ENCODE measurements at regions of chr10 and their contacts with region 1.

Region 1: GRCh38 chr10:100847440-100847839 is 65.3 kb upstream of the SLF2 start:
- DNase-seq: peak; percentile 94
- H3K4me3 Mint-ChIP-seq: peak overlapping the region; percentile 18
- H3K27ac Mint-ChIP-seq: peak overlapping the region; percentile 86
- H3K4me1 Mint-ChIP-seq: peaks cover 28% of the 10 kb centered on the region
- H3K27me3 Mint-ChIP-seq: peaks cover 48% of the 10 kb centered on the region

Region 2: DNA sequence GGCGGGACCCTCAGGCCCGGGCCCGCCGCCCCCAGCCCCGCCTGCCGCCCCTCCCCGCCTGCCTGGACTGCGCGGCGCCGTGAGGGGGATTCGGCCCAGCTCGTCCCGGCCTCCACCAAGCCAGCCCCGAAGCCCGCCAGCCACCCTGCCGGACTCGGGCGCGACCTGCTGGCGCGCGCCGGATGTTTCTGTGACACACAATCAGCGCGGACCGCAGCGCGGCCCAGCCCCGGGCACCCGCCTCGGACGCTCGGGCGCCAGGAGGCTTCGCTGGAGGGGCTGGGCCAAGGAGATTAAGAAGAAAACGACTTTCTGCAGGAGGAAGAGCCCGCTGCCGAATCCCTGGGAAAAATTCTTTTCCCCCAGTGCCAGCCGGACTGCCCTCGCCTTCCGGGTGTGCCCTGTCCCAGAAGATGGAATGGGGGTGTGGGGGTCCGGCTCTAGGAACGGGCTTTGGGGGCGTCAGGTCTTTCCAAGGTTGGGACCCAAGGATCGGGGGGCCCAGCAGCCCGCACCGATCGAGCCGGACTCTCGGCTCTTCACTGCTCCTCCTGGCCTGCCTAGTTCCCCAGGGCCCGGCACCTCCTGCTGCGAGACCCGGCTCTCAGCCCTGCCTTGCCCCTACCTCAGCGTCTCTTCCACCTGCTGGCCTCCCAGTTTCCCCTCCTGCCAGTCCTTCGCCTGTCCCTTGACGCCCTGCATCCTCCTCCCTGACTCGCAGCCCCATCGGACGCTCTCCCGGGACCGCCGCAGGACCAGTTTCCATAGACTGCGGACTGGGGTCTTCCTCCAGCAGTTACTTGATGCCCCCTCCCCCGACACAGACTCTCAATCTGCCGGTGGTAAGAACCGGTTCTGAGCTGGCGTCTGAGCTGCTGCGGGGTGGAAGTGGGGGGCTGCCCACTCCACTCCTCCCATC is 19.4 kb before region 1 on chr10:
- CTCF ChIA-PET with region 1: interaction called, 3 read pairs
- POLR2A ChIA-PET with region 1: no interaction called
- intact Hi-C with region 1: loop called (anchors 1 kb)
- DNase-seq: peak; percentile 57
- H3K4me3 Mint-ChIP-seq: peak overlapping the region; percentile 67
- H3K27ac Mint-ChIP-seq: no peak overlapping the region
- H3K4me1 Mint-ChIP-seq: peaks cover 21% of the 10 kb centered on the region
- H3K27me3 Mint-ChIP-seq: peaks cover 72% of the 10 kb centered on the region

Region 3: DNA sequence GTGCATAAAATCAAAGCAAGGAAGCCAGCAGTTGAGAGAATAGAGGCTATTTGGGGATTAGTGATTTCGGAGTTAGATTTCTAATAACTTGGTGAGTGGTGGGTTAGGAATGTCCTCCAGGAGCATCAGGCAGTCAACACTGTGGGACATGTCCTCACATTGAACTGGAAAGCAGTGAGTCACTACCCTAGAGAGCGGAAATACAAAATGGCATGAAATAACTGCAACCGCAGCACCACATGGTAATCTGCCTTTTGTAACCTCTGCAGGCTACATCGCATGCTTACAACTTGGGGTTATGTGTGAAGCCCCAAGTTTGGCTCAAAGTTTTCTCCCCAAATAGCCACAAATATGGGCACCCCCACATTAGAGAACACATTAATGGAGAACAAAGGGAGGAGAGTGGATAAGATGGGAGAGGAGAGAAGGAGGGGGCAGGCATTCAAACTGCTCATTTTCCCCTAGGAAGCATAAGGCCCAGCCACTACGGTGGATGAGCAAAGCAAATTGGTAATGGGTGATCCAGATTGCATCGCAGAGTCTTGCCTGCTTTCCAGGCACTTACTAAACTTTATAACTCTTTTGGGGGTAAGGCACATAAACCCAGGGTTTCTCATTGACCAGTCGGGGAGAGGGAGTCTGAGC is 43.4 kb after region 1 on chr10:
- CTCF ChIA-PET with region 1: no interaction called
- POLR2A ChIA-PET with region 1: no interaction called
- intact Hi-C with region 1: no loop called
- DNase-seq: no peak
- H3K4me3 Mint-ChIP-seq: no peak overlapping the region
- H3K27ac Mint-ChIP-seq: no peak overlapping the region
- H3K4me1 Mint-ChIP-seq: peaks cover 2% of the 10 kb centered on the region
- H3K27me3 Mint-ChIP-seq: peaks cover 15% of the 10 kb centered on the region

Measured in activated CD4-positive, alpha-beta memory T cell treated with anti-CD3 and anti-CD28 coated beads for 36 hours (primary cell).